ENCODE measurements at regions of chr7 and their contacts with region 1.

Region 1: GRCh38 chr7:104156842-104157277 is 51.0 kb downstream of the ORC5 start:
- DNase-seq: no peak
- ATAC-seq: no peak

Region 2: DNA sequence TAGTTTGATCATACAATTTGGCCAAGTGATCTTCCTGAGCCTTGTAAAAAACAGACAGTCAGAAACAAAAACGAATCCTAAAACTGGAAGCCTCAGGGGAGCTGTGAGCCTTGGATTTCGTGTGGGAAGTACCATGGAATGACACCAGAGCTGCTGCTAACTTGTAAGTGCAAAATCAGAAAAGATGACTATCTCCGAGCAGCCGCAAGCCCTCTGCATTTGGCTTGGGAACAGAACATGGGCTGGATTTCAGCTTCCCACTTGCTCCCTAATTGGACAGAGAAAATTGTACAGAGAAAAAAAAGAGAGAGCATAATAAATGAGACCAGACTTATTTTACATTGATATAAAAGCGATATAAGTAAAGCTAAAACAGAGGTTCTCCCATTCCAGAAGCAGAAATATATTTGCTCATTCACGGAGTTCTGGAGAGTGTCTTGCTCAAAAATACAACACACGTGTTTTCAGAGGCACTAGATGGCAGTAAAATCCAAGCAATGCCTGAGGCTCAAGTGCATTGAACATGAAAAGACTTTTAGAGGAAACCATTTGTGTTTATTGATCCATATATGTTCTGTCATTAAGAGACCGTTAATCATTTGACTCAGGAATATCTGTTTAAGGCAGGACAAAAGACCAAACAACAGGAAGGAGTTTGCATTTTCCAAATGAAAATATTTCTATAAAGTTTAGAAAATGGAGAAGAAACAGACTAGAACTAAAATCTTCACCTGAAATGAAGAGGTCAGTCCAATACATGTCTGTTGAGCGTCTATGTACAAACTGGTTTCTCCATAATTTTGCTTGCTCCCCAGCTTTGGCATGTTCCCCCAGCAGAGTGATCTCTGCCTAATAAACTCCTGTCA is 632.6 kb before region 1 on chr7:
- intact Hi-C with region 1: loop called (anchors 10 kb)
- DNase-seq: no peak
- ATAC-seq: peak; percentile 71

Region 3: GRCh38 chr7:103573479-103574058 is 583.3 kb before region 1 on chr7:
- intact Hi-C with region 1: loop called (anchors 5 kb)
- DNase-seq: no peak
- ATAC-seq: peak; percentile 29

Region 4: DNA sequence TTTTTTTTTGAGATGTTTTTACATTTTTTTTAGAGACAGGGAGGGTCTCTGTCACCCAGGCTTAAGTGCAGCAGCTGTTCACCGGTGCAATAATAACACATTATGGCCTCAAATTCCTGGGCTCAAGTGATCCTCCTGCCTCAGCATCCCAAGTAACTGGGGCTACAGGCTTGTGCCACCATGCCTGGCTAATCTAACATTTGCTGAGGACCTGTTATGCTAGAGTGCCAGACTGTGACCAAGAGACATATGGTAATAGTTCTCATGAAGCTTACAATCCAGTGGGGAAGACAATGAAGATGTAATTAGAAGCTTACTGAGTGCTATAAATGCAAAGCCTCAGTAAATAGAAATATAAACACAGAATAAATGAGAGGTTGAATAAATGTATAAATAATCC is 68.6 kb after region 1 on chr7:
- intact Hi-C with region 1: no loop called
- DNase-seq: no peak
- ATAC-seq: no peak

Region 5: DNA sequence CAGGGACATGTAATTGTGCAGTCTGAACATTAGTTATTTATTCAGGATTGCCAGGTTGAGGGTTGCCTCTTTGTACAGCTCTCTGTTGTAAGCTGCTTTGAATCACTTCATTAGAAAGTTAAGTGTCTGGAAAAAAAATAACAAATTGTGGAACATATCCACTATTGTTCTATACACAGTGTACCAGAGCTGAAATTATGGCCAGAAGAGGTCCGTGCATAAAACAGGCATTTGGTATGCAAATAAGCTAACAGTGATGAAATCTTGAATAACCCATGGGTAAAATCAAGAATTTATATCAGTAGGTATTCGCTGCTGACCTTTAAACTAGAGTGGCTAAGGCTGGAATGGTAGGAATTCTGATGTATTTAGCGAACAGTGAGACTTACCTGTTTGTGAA is 323.7 kb after region 1 on chr7:
- intact Hi-C with region 1: no loop called
- DNase-seq: no peak
- ATAC-seq: no peak

Measured in Right ventricle myocardium superior (tissue), 1 donor.